HAP-1 (cell line): ENCODE measurements at regions of chr11 and their contacts with region 1.

Region 1: DNA sequence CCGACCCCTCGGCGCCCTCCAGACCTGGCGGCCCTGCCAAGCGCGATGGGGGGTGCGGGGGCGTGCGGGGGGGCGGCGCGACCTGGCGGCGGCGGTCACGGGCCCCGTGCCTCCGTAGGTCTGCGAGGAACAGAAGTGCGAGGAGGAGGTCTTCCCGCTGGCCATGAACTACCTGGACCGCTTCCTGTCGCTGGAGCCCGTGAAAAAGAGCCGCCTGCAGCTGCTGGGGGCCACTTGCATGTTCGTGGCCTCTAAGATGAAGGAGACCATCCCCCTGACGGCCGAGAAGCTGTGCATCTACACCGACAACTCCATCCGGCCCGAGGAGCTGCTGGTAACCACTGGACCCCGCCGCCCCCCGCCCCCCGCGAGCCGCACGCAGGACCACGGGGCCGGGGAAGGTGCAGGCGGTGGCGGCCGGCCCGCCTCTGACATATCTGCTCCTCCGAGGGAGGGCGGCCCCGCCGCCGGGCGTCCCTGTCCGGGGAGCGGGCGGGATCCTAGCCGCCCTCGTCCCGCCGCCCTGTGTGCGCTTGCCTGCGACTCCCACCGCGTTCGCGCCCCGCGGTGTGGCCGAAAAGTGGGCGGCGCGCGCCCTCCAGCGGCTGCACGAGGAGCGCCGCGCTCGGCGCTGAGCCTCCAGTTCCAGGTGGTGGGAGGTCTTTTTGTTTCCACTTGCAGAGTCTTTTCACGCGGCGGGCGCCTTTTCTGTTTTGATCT is 2.1 kb downstream of the CCND1 start:
- DNase-seq: peak; percentile 75 to 85
- H3K4me3 ChIP-seq: peak overlapping the region; percentile 34
- H3K4me1 ChIP-seq: peaks cover 11% of the 10 kb centered on the region
- H3K27me3 ChIP-seq: peaks cover 48% of the 10 kb centered on the region

Region 2: GRCh38 chr11:69106031-69106820 is 536.8 kb before region 1 on chr11:
- in situ Hi-C with region 1: loop called (anchors 5 kb)
- DNase-seq: no peak
- H3K4me3 ChIP-seq: no peak overlapping the region
- H3K4me1 ChIP-seq: no peaks in the 10 kb centered on the region
- H3K27me3 ChIP-seq: peaks cover 4% of the 10 kb centered on the region; the same call in 1 of the 2 replicates

Region 3: DNA sequence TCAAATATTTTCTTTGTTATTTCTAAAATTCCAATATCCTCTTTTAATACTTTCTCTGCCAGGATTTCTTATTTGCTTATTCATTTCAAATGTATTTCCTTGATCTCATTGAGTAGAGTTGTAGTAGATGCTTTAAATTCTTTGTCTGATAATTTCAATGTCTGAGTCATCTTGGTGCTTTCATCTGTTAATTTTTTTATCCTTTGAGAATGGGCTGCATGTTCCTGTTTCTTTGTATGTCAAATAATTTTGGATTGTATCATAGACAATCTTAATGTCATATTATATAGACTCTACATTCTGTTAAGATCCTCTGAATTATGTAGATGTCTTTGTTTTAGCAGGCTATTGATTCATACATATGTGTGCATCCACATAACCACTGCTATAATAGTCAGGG is 291.6 kb before region 1 on chr11:
- in situ Hi-C with region 1: no loop called
- DNase-seq: no peak
- H3K4me3 ChIP-seq: no peak overlapping the region
- H3K4me1 ChIP-seq: no peaks in the 10 kb centered on the region
- H3K27me3 ChIP-seq: no peaks in the 10 kb centered on the region; the same call in none of the 2 replicates